GM12878 (cell line): ENCODE measurements at regions of chrX and their contacts with region 1.

Region 1: GRCh38 chrX:115560978-115561604 is at the start of gene PLS3:
- DNase-seq: no peak
- ATAC-seq: peak; percentile 76
- H3K4me3 ChIP-seq: peak within 1 kb of the TSS; percentile 25
- H3K27ac ChIP-seq: peak within 1 kb of the TSS; percentile 42; the same call in 1 of the 2 replicates
- H3K4me1 ChIP-seq: no peaks in the 10 kb centered on the region
- H3K27me3 ChIP-seq: peaks cover 0 to 3% of the 10 kb centered on the region in 2 experiments; a peak in 3 of 4 replicates
- CTCF ChIP-seq: no peak
- EP300 ChIP-seq: no peak
- POLR2A ChIP-seq: no peak
- RAD21 ChIP-seq: no peak
- polyA plus RNA-seq, gene PLS3: 122 to 169 TPM

Region 2: GRCh38 chrX:115337491-115338144 is 223.5 kb before region 1 on chrX:
- CTCF ChIA-PET with region 1: interaction called, 62 read pairs
- POLR2A ChIA-PET with region 1: no interaction called
- RAD21 ChIA-PET with region 1: interaction called, 8 read pairs
- SMC1A ChIA-PET with region 1: interaction called, 79 read pairs
- in situ Hi-C with region 1: loop called (anchors 10 kb)
- intact Hi-C with region 1: no loop called
- DNase-seq: no peak
- ATAC-seq: no peak
- H3K4me3 ChIP-seq: no peak overlapping the region
- H3K27ac ChIP-seq: no peak overlapping the region
- H3K4me1 ChIP-seq: no peaks in the 10 kb centered on the region
- H3K27me3 ChIP-seq: no peaks in the 10 kb centered on the region
- CTCF ChIP-seq: no peak
- EP300 ChIP-seq: no peak
- POLR2A ChIP-seq: no peak
- RAD21 ChIP-seq: no peak

Region 3: DNA sequence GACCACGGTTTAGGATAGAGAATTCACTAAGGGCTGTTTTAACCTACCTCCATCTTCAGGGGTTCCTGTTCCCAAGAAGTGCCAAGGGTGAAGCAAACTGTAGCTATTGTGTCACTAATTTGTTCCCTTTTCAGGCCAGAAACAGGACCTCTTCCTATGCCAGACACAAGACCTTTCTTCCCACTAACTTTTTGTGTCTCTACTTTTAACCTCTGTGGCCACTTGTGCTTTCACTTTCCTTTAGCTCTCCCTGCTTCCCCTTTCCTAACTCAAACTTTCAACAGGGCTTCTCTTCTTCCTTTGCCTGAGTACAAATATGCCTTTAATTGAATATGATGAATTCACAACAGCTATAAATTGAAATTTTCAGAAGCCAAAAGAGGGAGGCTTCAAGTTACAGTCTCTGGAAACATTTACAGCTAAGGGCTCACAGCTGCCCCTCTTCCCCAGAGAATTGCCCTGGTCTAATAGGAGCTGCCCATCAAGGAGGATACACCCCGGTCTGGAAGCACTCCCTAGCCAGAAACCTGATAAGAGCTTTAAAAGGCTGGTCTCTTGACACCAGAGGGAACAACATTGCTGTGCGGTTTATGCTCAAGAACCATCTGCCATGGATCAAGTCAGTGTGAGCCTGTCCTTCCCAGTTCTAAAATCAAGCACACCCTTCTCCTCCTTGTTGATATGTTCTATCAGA is 61.8 kb before region 1 on chrX:
- CTCF ChIA-PET with region 1: interaction called, 3 read pairs
- POLR2A ChIA-PET with region 1: interaction called, 5 read pairs
- RAD21 ChIA-PET with region 1: interaction called, 14 read pairs
- SMC1A ChIA-PET with region 1: interaction called, 15 read pairs
- in situ Hi-C with region 1: no loop called
- intact Hi-C with region 1: loop called (anchors 1 kb)
- DNase-seq: no peak
- ATAC-seq: peak; percentile 29
- H3K4me3 ChIP-seq: 0 out of 2 replicates have a peak overlapping the region, but pooled peaks have one; percentile 22
- H3K27ac ChIP-seq: no peak overlapping the region
- H3K4me1 ChIP-seq: no peaks in the 10 kb centered on the region
- H3K27me3 ChIP-seq: no peaks in the 10 kb centered on the region
- CTCF ChIP-seq: no peak
- EP300 ChIP-seq: no peak
- POLR2A ChIP-seq: no peak
- RAD21 ChIP-seq: no peak

Region 4: GRCh38 chrX:115592997-115593734 is 32.1 kb after region 1 on chrX:
- CTCF ChIA-PET with region 1: interaction called, 3 read pairs
- POLR2A ChIA-PET with region 1: interaction called, 7 read pairs
- RAD21 ChIA-PET with region 1: interaction called, 5 read pairs
- SMC1A ChIA-PET with region 1: interaction called, 25 read pairs
- in situ Hi-C with region 1: no loop called
- intact Hi-C with region 1: no loop called
- DNase-seq: no peak
- ATAC-seq: peak; percentile 22; the same call in 2 of the 3 replicates
- H3K4me3 ChIP-seq: no peak overlapping the region
- H3K27ac ChIP-seq: no peak overlapping the region
- H3K4me1 ChIP-seq: no peaks in the 10 kb centered on the region
- H3K27me3 ChIP-seq: no peaks in the 10 kb centered on the region
- CTCF ChIP-seq: no peak
- EP300 ChIP-seq: no peak
- POLR2A ChIP-seq: no peak
- RAD21 ChIP-seq: no peak